K562 (cell line): ENCODE measurements at regions of chr2 and their contacts with region 1.

Region 1: GRCh38 chr2:46364797-46365457 is 67.7 kb downstream of the EPAS1 start:
- DNase-seq: peak; percentile 63 to 75 (median 74)
- ATAC-seq: peak; percentile 86
- H3K4me3 ChIP-seq: no peak overlapping the region
- H3K27ac ChIP-seq: no peak overlapping the region
- H3K4me1 ChIP-seq: peaks cover 0 to 7% of the 10 kb centered on the region in 2 experiments; a peak in 2 of 5 replicates
- H3K27me3 ChIP-seq: no peaks in the 10 kb centered on the region
- CTCF ChIP-seq: peak; percentile 64 to 84 (median 73)
- EP300 ChIP-seq: no peak
- POLR2A ChIP-seq: no peak
- RAD21 ChIP-seq: peak; percentile 88 to 94

Region 2: GRCh38 chr2:45743531-45744396 is 621.2 kb before region 1 on chr2:
- CTCF ChIA-PET with region 1: no interaction called
- POLR2A ChIA-PET with region 1: no interaction called
- in situ Hi-C with region 1: no loop called
- intact Hi-C with region 1: no loop called
- DNase-seq: no peak
- ATAC-seq: no peak
- H3K4me3 ChIP-seq: no peak overlapping the region
- H3K27ac ChIP-seq: no peak overlapping the region
- H3K4me1 ChIP-seq: no peaks in the 10 kb centered on the region
- H3K27me3 ChIP-seq: peaks cover 21 to 43% of the 10 kb centered on the region in 2 experiments; a peak in 3 of 5 replicates
- CTCF ChIP-seq: no peak
- EP300 ChIP-seq: no peak
- POLR2A ChIP-seq: no peak
- RAD21 ChIP-seq: no peak

Region 3: DNA sequence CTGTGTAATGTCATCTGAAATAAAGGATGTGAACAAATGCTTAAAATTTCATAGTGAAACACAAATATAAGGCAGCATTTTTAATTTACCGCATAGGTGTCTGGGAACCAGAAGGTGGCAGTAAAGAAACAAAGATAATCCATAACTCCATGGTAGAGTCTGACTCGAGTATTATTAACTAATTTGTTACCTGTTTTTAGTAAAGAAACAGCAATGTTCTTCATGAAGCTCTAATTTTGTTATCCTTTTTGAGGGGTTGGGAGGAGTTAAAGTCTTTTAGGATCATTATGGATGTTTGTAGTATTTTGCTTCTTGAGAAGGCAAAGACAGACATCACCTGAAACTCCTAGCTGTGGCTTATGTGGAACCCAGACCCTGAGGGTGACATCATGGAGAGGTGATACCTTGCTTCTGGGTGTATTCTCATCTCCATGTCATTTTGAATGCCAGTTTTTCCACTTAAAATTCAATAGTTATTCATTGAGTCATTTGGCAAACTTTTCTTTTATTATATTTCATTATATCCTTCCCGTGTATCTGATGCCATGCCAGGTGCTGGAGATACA is 353.9 kb before region 1 on chr2:
- CTCF ChIA-PET with region 1: interaction called, 17 read pairs
- POLR2A ChIA-PET with region 1: no interaction called
- in situ Hi-C with region 1: loop called (anchors 10 kb)
- intact Hi-C with region 1: loop called (anchors 5 kb)
- DNase-seq: peak in 2 of 4 experiments; percentile 34 to 49
- ATAC-seq: peak; percentile 77
- H3K4me3 ChIP-seq: no peak overlapping the region
- H3K27ac ChIP-seq: no peak overlapping the region
- H3K4me1 ChIP-seq: no peaks in the 10 kb centered on the region
- H3K27me3 ChIP-seq: peaks cover 14 to 18% of the 10 kb centered on the region in 2 experiments
- CTCF ChIP-seq: peak in 2 of 3 experiments; percentile 23 to 81; a peak in 4 of 6 replicates
- EP300 ChIP-seq: no peak
- POLR2A ChIP-seq: no peak
- RAD21 ChIP-seq: peak; percentile 81 to 88

Region 4: GRCh38 chr2:46134531-46135181 is 230.3 kb before region 1 on chr2:
- CTCF ChIA-PET with region 1: no interaction called
- POLR2A ChIA-PET with region 1: no interaction called
- in situ Hi-C with region 1: no loop called
- intact Hi-C with region 1: no loop called
- DNase-seq: peak in 3 of 4 experiments; percentile 15 to 27 (median 15)
- ATAC-seq: 0 out of 3 replicates have a peak, but pooled peaks have one; percentile 35
- H3K4me3 ChIP-seq: no peak overlapping the region
- H3K27ac ChIP-seq: no peak overlapping the region
- H3K4me1 ChIP-seq: no peaks in the 10 kb centered on the region
- H3K27me3 ChIP-seq: peaks cover 18 to 24% of the 10 kb centered on the region in 2 experiments; a peak in 4 of 5 replicates
- CTCF ChIP-seq: no peak
- EP300 ChIP-seq: peak; percentile 22; the same call in 1 of the 2 replicates
- POLR2A ChIP-seq: no peak
- RAD21 ChIP-seq: no peak

Region 5: GRCh38 chr2:46187112-46187618 is 177.8 kb before region 1 on chr2:
- CTCF ChIA-PET with region 1: no interaction called
- POLR2A ChIA-PET with region 1: no interaction called
- in situ Hi-C with region 1: no loop called
- intact Hi-C with region 1: loop called (anchors 10 kb)
- DNase-seq: no peak
- ATAC-seq: no peak
- H3K4me3 ChIP-seq: no peak overlapping the region
- H3K27ac ChIP-seq: no peak overlapping the region
- H3K4me1 ChIP-seq: no peaks in the 10 kb centered on the region
- H3K27me3 ChIP-seq: peaks cover 0 to 21% of the 10 kb centered on the region in 2 experiments; a peak in 3 of 5 replicates
- CTCF ChIP-seq: no peak
- EP300 ChIP-seq: no peak
- POLR2A ChIP-seq: no peak
- RAD21 ChIP-seq: no peak

Region 6: GRCh38 chr2:46461011-46461674 is 96.2 kb after region 1 on chr2:
- CTCF ChIA-PET with region 1: no interaction called
- POLR2A ChIA-PET with region 1: no interaction called
- in situ Hi-C with region 1: no loop called
- intact Hi-C with region 1: loop called (anchors 2 kb)
- DNase-seq: peak; percentile 76 to 84 (median 82)
- ATAC-seq: peak; percentile 83
- H3K4me3 ChIP-seq: no peak overlapping the region
- H3K27ac ChIP-seq: no peak overlapping the region; the same call in 2 of the 3 replicates
- H3K4me1 ChIP-seq: peaks cover 8 to 10% of the 10 kb centered on the region in 2 experiments; a peak in 4 of 5 replicates
- H3K27me3 ChIP-seq: no peaks in the 10 kb centered on the region
- CTCF ChIP-seq: peak; percentile 94 to 98 (median 97)
- EP300 ChIP-seq: no peak
- POLR2A ChIP-seq: no peak
- RAD21 ChIP-seq: peak; percentile 97 to 98